Right ventricle myocardium superior (tissue), 1 donor: ENCODE measurements at regions of chr2 and their contacts with region 1.

Region 1: GRCh38 chr2:85551698-85552678 is 9.3 kb downstream of the GGCX start:
- DNase-seq: peak; percentile 84
- ATAC-seq: peak; percentile 76

Region 2: DNA sequence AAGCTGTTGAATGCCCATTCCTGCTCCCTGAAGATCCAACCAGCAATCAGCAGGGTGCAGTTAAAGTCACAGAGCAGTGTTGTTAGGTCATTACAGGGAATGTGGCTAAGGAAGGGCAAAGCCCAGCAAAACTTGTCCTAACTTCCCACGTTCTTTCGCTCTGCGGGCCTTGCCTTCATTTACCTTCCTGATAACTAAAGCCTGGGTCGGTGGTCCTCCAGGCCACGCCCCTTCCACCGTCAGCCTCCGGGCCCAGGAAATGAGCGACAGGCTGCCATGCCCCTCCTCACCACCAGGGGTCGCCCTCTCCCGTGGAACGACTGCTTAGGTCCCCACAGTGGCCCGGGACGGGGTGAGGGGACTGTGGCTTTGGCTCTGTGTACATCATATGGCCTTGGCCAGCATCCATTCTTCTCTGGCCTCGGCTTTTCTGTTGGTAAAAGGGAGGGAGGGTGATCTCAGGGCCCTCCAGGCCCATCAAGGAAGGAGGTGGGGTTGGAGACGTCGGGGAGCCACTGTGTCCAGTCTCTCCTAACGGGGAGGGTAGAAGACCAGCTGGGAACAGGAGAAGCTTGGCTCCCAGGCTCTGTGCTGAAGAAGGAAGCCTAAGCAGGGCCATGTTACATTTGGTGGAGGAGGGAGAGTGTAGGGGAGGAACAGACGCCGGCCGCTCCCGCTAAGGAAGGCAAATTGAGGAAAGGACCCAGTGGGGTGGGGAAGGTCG is 131.3 kb before region 1 on chr2:
- intact Hi-C with region 1: loop called (anchors 2 kb)
- DNase-seq: peak; percentile 95
- ATAC-seq: peak; percentile 78